Heart left ventricle (tissue), 16 donors: ENCODE measurements at regions of chr5 and their contacts with region 1.

Region 1: DNA sequence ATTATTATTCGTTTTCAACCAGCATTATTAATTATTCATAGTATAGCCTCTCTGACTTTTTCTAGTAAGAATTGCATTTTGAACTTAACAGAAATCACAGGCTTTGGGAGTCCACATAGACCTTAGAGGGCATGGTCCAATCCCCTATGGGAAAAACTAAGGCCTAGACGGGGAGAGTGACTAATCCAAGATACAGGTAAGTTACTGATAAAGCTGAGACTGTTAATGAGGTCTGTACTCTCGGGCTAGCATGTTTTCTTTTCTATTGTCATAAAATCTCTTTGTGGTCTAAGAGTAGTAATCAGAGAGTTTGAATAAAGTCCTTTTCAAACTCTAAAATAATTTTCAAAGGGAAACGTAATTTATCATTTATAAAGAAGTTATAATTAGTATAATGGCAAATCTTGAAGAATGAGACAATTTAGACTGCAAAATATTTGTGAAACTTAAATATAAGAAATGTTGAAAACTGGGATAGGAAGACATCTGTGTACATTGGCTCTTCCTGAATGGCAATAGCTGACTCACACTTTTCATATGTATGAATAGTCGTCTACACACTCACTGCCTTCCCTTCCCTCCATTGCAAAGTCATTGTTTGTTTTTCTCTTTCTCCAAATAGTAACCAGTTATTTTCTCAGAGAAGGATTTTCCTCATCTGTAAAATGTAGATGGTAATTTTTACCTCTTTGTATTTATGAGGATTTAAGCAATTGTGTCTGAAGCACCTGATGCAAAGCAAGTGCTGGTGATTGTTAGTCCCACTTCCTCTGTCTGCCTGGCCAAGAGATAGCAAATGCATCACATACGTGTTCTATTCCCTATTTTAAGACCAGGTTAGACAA is 207.9 kb upstream of the CD180 start:
- DNase-seq: no peak
- ATAC-seq: no peak
- H3K4me3 ChIP-seq: no peak overlapping the region
- H3K27ac ChIP-seq: no peak overlapping the region
- H3K4me1 ChIP-seq: peaks cover 0 to 15% (median 0%) of the 10 kb centered on the region in 12 donors
- H3K27me3 ChIP-seq: no peaks in the 10 kb centered on the region
- CTCF ChIP-seq: no peak
- POLR2A ChIP-seq: no peak

Region 2: GRCh38 chr5:67350618-67351201 is 53.8 kb before region 1 on chr5:
- intact Hi-C with region 1: loop called in 1 of 10 experiments (anchors 10 kb)
- DNase-seq: no peak
- ATAC-seq: peak in 2 of 4 donors; percentile 26 to 45
- H3K4me3 ChIP-seq: peak overlapping the region in 1 of 12 donors; percentile 9
- H3K27ac ChIP-seq: peak overlapping the region in 2 of 12 donors; percentile 7 to 20
- H3K4me1 ChIP-seq: peaks cover 0 to 24% (median 0%) of the 10 kb centered on the region in 12 donors
- H3K27me3 ChIP-seq: no peaks in the 10 kb centered on the region
- CTCF ChIP-seq: no peak
- POLR2A ChIP-seq: no peak